ENCODE measurements at regions of chr15 and their contacts with region 1.

Region 1: DNA sequence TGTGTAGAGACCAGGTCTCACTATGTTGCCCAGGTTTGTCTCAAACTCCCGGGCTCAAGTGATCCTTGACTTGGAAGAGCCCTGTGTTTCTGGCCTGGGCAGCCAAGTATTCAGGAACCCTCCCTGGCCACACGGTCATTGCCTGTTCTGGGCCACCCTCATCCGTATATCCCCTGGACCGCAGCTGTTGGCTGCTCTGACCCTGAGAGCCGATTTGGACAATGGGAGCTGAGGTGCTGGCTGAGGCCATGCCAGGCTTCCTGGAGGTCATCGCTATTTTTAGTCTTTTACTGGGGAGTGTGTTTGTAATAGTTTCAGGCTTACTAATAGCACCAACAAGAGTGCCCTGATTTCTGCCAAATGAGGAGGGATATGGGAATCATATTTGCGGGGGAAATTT is 60.7 kb downstream of the ADAMTS7 start:
- DNase-seq: no peak
- ATAC-seq: no peak
- H3K4me3 ChIP-seq: no peak overlapping the region
- H3K4me3 Mint-ChIP-seq: peak overlapping the region; percentile 19
- H3K27ac ChIP-seq: no peak overlapping the region
- H3K27ac Mint-ChIP-seq: no peak overlapping the region
- H3K4me1 ChIP-seq: peaks cover 8% of the 10 kb centered on the region
- H3K4me1 Mint-ChIP-seq: peaks cover 4% of the 10 kb centered on the region
- H3K27me3 ChIP-seq: no peaks in the 10 kb centered on the region
- H3K27me3 Mint-ChIP-seq: no peaks in the 10 kb centered on the region
- CTCF ChIP-seq: no peak

Region 2: GRCh38 chr15:77369168-77369567 is 1381.4 kb before region 1 on chr15:
- CTCF ChIA-PET with region 1: no interaction called
- POLR2A ChIA-PET with region 1: no interaction called
- intact Hi-C with region 1: no loop called
- DNase-seq: no peak
- ATAC-seq: no peak
- H3K4me3 ChIP-seq: no peak overlapping the region
- H3K4me3 Mint-ChIP-seq: no peak overlapping the region
- H3K27ac ChIP-seq: no peak overlapping the region
- H3K27ac Mint-ChIP-seq: no peak overlapping the region
- H3K4me1 ChIP-seq: no peaks in the 10 kb centered on the region
- H3K4me1 Mint-ChIP-seq: no peaks in the 10 kb centered on the region
- H3K27me3 ChIP-seq: no peaks in the 10 kb centered on the region
- H3K27me3 Mint-ChIP-seq: no peaks in the 10 kb centered on the region
- CTCF ChIP-seq: no peak

Region 3: DNA sequence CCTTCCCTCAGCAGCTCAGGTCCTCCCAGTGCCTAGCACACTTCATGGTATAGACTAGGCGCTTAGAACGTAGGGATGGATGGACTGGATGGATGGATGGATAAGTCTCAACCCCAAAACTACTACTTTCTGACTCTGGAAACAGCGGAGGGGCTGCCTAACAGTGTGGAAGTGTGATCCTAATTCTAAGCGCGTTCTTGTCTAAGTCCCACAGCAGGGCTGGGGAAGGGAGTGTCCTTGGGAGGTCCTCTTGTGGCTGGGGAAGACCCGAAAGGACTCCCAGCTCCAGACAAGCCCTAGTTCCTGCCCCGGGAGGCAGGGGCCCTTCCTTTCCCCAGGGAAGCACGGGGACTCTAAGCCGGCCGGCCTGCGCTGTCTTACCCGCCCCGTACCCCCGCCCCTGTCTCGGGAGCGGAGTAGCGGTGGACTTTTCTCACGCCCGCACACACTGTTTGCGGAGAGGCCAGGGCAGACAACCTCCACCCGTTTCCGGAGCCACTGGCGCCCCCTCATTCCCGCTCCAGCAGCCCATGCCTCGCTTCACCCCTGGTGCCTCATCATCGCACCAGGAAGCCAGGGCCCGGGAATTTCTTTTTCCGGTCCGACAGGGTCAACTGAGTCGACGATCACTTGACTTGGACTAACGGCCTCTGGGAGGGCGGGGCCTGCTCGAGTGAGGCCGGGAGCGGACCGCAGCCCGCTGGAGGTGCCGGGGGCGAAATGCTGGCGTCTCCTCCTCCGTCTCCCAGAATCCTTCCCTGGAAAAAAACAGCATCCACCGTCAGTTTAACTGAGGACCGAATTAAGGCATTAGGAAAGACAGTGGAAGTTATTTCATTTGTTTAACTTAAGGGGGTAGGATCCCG is 806.3 kb before region 1 on chr15:
- CTCF ChIA-PET with region 1: no interaction called
- POLR2A ChIA-PET with region 1: no interaction called
- intact Hi-C with region 1: loop called in 1 of 2 experiments (anchors 5 kb)
- DNase-seq: peak in 6 of 9 experiments; percentile 13 to 67 (median 35)
- ATAC-seq: peak; percentile 42
- H3K4me3 ChIP-seq: peak overlapping the region; percentile 51 to 52
- H3K4me3 Mint-ChIP-seq: peak overlapping the region; percentile 80
- H3K27ac ChIP-seq: no peak overlapping the region
- H3K27ac Mint-ChIP-seq: no peak overlapping the region
- H3K4me1 ChIP-seq: no peaks in the 10 kb centered on the region
- H3K4me1 Mint-ChIP-seq: peaks cover 10% of the 10 kb centered on the region
- H3K27me3 ChIP-seq: no peaks in the 10 kb centered on the region
- H3K27me3 Mint-ChIP-seq: no peaks in the 10 kb centered on the region
- CTCF ChIP-seq: no peak

Region 4: GRCh38 chr15:78618490-78618934 is 132.1 kb before region 1 on chr15:
- CTCF ChIA-PET with region 1: interaction called, 20 read pairs
- POLR2A ChIA-PET with region 1: no interaction called
- intact Hi-C with region 1: no loop called
- DNase-seq: peak; percentile 56 to 88 (median 78)
- ATAC-seq: no peak
- H3K4me3 ChIP-seq: no peak overlapping the region
- H3K4me3 Mint-ChIP-seq: no peak overlapping the region
- H3K27ac ChIP-seq: no peak overlapping the region
- H3K27ac Mint-ChIP-seq: no peak overlapping the region
- H3K4me1 ChIP-seq: peaks cover 9% of the 10 kb centered on the region
- H3K4me1 Mint-ChIP-seq: peaks cover 16% of the 10 kb centered on the region
- H3K27me3 ChIP-seq: peaks cover 5 to 6% of the 10 kb centered on the region in 2 experiments
- H3K27me3 Mint-ChIP-seq: peaks cover 30% of the 10 kb centered on the region
- CTCF ChIP-seq: peak; percentile 72

Region 5: DNA sequence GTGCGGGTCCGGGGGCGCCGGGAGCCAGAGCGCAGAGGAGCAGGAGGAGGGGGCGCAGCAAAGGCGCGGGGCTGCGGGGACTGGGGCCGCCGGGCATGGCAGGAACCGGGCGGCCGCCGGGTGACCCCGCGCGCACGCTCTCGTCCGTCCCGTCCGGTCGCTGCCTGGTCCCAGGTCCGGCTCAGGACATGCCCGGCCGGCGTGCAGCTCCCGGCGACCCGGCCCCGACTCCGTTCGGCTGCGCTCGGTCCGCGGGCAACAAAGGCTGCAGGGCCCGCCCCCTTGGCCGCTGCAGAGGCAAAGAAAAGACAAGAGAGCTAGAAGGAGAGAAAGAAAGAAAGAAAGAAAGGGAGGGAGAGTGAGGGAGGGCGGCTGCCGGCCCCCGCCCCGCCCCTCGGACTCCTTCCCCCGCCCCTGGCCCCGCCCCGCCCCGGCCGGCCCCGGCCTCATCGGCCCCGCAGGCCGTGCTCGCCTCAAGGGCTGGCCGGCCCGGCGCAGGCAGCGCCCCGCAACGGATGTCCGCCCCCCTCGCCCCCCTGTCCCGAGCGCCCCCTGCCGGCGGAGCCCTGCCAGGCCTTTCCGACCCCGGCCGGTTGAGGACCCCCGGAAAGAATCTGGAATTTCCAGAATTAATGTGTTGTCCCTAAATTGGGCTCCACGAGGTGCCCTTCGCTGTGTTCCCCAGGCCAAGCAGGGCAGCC is 60.7 kb after region 1 on chr15 and contains the start of gene ADAMTS7:
- CTCF ChIA-PET with region 1: interaction called, 4 read pairs
- POLR2A ChIA-PET with region 1: no interaction called
- intact Hi-C with region 1: loop called in 1 of 2 experiments (anchors 10 kb)
- DNase-seq: peak; percentile 12 to 73 (median 59)
- ATAC-seq: peak; percentile 73
- H3K4me3 ChIP-seq: peak within 1 kb of the TSS; percentile 43 to 48
- H3K4me3 Mint-ChIP-seq: peak within 1 kb of the TSS; percentile 82
- H3K27ac ChIP-seq: no peak within 1 kb of the TSS
- H3K27ac Mint-ChIP-seq: no peak within 1 kb of the TSS
- H3K4me1 ChIP-seq: peaks cover 14% of the 10 kb centered on the region
- H3K4me1 Mint-ChIP-seq: peaks cover 14% of the 10 kb centered on the region
- H3K27me3 ChIP-seq: peaks cover 8 to 16% of the 10 kb centered on the region in 2 experiments
- H3K27me3 Mint-ChIP-seq: peaks cover 44% of the 10 kb centered on the region
- CTCF ChIP-seq: peak; percentile 62
- total RNA-seq, gene ADAMTS7: not detected